ENCODE measurements at regions of chr1 and their contacts with region 1.

Region 1: GRCh38 chr1:110780600-110781484 is 92.1 kb upstream of the CD53 start:
- DNase-seq: peak; percentile 84
- ATAC-seq: peak; percentile 68
- H3K4me3 Mint-ChIP-seq: no peak overlapping the region
- H3K27ac Mint-ChIP-seq: no peak overlapping the region
- H3K4me1 Mint-ChIP-seq: peaks cover 32% of the 10 kb centered on the region
- H3K27me3 Mint-ChIP-seq: no peaks in the 10 kb centered on the region

Region 2: GRCh38 chr1:110203021-110203661 is 577.7 kb before region 1 on chr1:
- CTCF ChIA-PET with region 1: no interaction called
- POLR2A ChIA-PET with region 1: no interaction called
- intact Hi-C with region 1: loop called in 1 of 2 experiments (anchors 5 kb)
- DNase-seq: peak; percentile 82
- ATAC-seq: peak; percentile 63
- H3K4me3 Mint-ChIP-seq: no peak overlapping the region
- H3K27ac Mint-ChIP-seq: peak overlapping the region; percentile 79
- H3K4me1 Mint-ChIP-seq: peaks cover 15% of the 10 kb centered on the region
- H3K27me3 Mint-ChIP-seq: no peaks in the 10 kb centered on the region

Region 3: GRCh38 chr1:110554871-110555801 is 225.7 kb before region 1 on chr1:
- CTCF ChIA-PET with region 1: interaction called, 23 read pairs
- POLR2A ChIA-PET with region 1: no interaction called
- intact Hi-C with region 1: loop called (anchors 1 to 2 kb)
- DNase-seq: peak; percentile 76
- ATAC-seq: peak; percentile 79
- H3K4me3 Mint-ChIP-seq: no peak overlapping the region
- H3K27ac Mint-ChIP-seq: no peak overlapping the region
- H3K4me1 Mint-ChIP-seq: peaks cover 2% of the 10 kb centered on the region
- H3K27me3 Mint-ChIP-seq: peaks cover 45% of the 10 kb centered on the region

Region 4: GRCh38 chr1:110630839-110631663 is 149.8 kb before region 1 on chr1:
- CTCF ChIA-PET with region 1: interaction called, 14 read pairs
- POLR2A ChIA-PET with region 1: no interaction called
- intact Hi-C with region 1: loop called (anchors 1 to 5 kb)
- DNase-seq: peak; percentile 93
- ATAC-seq: peak; percentile 76
- H3K4me3 Mint-ChIP-seq: no peak overlapping the region
- H3K27ac Mint-ChIP-seq: no peak overlapping the region
- H3K4me1 Mint-ChIP-seq: peaks cover 55% of the 10 kb centered on the region
- H3K27me3 Mint-ChIP-seq: no peaks in the 10 kb centered on the region

Region 5: GRCh38 chr1:110798691-110799256 is 17.9 kb after region 1 on chr1:
- CTCF ChIA-PET with region 1: interaction called, 19 read pairs
- POLR2A ChIA-PET with region 1: no interaction called
- intact Hi-C with region 1: no loop called
- DNase-seq: no peak
- ATAC-seq: no peak
- H3K4me3 Mint-ChIP-seq: no peak overlapping the region
- H3K27ac Mint-ChIP-seq: no peak overlapping the region
- H3K4me1 Mint-ChIP-seq: no peaks in the 10 kb centered on the region
- H3K27me3 Mint-ChIP-seq: no peaks in the 10 kb centered on the region

Region 6: DNA sequence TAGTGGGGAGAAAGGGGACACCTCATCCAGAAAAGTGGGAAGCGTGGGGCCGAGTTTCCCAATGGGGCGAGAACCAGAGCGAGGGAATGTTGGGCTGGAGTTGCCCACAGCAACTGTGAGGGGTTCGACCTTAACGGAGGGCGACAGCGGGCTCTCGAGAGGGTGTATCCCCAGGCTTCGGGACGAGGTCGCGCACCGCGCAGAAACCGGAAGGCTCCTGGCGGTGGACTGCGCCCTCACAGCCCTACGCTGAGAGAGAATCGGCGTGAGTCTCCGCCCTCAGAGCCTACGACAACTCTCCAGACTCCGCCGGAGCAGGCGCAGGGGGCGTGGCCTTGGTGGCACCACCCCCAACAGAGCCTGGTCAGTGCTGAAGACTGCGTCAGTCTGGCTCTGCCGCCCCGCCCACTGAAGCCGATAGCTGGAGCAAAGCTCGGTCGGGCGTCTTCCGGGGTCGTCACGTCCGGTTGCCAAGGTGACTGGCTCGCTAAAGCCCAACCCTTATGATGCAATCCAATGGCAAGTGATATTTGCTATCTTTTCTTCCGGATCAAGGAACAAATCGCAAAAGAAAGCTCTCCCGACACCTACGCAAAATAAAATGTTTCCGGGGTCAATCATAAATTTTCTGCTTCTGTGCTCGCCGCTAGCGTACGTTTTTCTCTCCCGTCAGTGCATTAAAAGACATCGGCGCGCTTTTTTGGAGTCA is 183.0 kb after region 1 on chr1 and contains the start of gene LRIF1:
- CTCF ChIA-PET with region 1: interaction called, 5 read pairs
- POLR2A ChIA-PET with region 1: no interaction called
- intact Hi-C with region 1: loop called in 1 of 2 experiments (anchors 10 kb)
- DNase-seq: peak; percentile 100
- ATAC-seq: peak; percentile 99
- H3K4me3 Mint-ChIP-seq: peak within 1 kb of the TSS; percentile 78
- H3K27ac Mint-ChIP-seq: peak within 1 kb of the TSS; percentile 94
- H3K4me1 Mint-ChIP-seq: peaks cover 30% of the 10 kb centered on the region
- H3K27me3 Mint-ChIP-seq: peaks cover 7% of the 10 kb centered on the region
- total RNA-seq, gene LRIF1: 15.1 to 15.4 TPM

Measured in activated CD4-positive, alpha-beta T cell treated with anti-CD3 and anti-CD28 coated beads for 36 hours (primary cell).